OCI-LY7 (cell line): ENCODE measurements at regions of chr14 and their contacts with region 1.

Region 1: GRCh38 chr14:77028384-77029231 is at the start of gene IRF2BPL:
- DNase-seq: peak; percentile 98
- H3K4me3 ChIP-seq: peak within 1 kb of the TSS; percentile 82
- H3K27ac ChIP-seq: peak within 1 kb of the TSS; percentile 93
- H3K4me1 ChIP-seq: peaks cover 63% of the 10 kb centered on the region
- CTCF ChIP-seq: no peak
- total RNA-seq, gene IRF2BPL: 18.8 and 25.8 TPM in 2 replicates

Region 2: GRCh38 chr14:76937181-76938091 is 91.2 kb before region 1 on chr14:
- CTCF ChIA-PET with region 1: interaction called, 14 read pairs
- POLR2A ChIA-PET with region 1: no interaction called
- intact Hi-C with region 1: no loop called
- DNase-seq: no peak
- H3K4me3 ChIP-seq: no peak overlapping the region
- H3K27ac ChIP-seq: no peak overlapping the region
- H3K4me1 ChIP-seq: no peaks in the 10 kb centered on the region
- CTCF ChIP-seq: no peak

Region 3: GRCh38 chr14:76956316-76957090 is 72.1 kb before region 1 on chr14:
- CTCF ChIA-PET with region 1: interaction called, 5 read pairs
- POLR2A ChIA-PET with region 1: interaction called, 6 read pairs
- intact Hi-C with region 1: loop called (anchors 1 kb)
- DNase-seq: peak; percentile 72
- H3K4me3 ChIP-seq: peak overlapping the region; percentile 60
- H3K27ac ChIP-seq: peak overlapping the region; percentile 63
- H3K4me1 ChIP-seq: peaks cover 41% of the 10 kb centered on the region
- CTCF ChIP-seq: no peak

Region 4: GRCh38 chr14:77040059-77040740 is 11.6 kb after region 1 on chr14:
- CTCF ChIA-PET with region 1: interaction called, 3 read pairs
- POLR2A ChIA-PET with region 1: interaction called, 56 read pairs
- intact Hi-C with region 1: loop called (anchors 1 kb)
- DNase-seq: peak; percentile 94
- H3K4me3 ChIP-seq: peak overlapping the region; percentile 61
- H3K27ac ChIP-seq: peak overlapping the region; percentile 96
- H3K4me1 ChIP-seq: peaks cover 87% of the 10 kb centered on the region
- CTCF ChIP-seq: no peak